Body of pancreas (tissue), 4 donors: ENCODE measurements at regions of chr22 and their contacts with region 1.

Region 1: GRCh38 chr22:50269970-50270665 is at the start of gene MAPK11:
- DNase-seq: peak in 2 of 4 donors; percentile 43 to 45
- ATAC-seq: peak; percentile 46
- H3K4me3 ChIP-seq: peak within 1 kb of the TSS in 1 of 2 donors; percentile 3
- H3K27ac ChIP-seq: peak within 1 kb of the TSS in 2 of 4 donors; percentile 28 to 44
- H3K4me1 ChIP-seq: peaks cover 52% of the 10 kb centered on the region
- H3K27me3 ChIP-seq: no peaks in the 10 kb centered on the region
- CTCF ChIP-seq: no peak
- POLR2A ChIP-seq: no peak
- total RNA-seq, gene MAPK11: 3.0 to 3.6 TPM

Region 2: DNA sequence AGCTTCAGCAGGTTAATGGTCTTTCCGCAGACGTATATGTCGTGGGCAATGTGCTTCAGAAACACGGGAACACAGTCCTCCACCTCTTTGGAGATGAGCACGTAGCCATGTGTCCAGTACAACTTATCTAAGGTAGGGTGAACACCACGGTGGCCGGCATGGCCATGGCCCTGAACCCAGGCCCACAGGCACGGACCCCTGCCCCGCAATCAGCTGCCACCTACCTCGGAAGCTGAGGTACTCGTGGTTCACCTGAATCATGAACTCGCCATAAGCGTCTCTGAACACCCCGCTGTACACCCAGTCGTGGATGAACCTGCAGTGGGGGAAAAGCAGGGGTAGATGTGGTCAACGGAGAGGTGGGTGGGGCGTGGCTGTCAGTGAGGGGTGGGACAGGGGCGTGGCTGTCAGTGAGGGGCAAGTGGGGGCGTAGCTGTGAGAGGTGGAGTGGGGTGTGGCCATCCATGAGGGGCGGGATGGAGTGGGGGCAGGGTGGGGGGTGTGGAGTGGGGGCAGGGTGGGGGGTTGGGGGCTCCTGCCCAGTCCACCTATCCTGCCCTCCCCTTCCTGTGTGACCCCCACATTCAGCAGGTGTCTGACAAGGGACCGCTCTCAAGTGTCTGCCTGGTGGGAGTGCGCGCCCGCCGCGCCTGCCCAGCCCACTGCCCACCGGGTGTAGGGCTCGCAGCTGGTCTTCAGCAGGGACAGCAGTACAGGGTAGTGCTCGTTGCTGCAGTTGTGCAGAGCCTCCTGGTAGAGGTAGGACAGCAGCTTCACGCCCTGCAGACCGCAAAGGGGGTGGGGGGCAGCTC is 43.8 kb before region 1 on chr22:
- intact Hi-C with region 1: no loop called
- DNase-seq: no peak
- ATAC-seq: no peak
- H3K4me3 ChIP-seq: no peak overlapping the region
- H3K27ac ChIP-seq: no peak overlapping the region
- H3K4me1 ChIP-seq: peaks cover 9% of the 10 kb centered on the region
- H3K27me3 ChIP-seq: no peaks in the 10 kb centered on the region
- CTCF ChIP-seq: no peak
- POLR2A ChIP-seq: no peak

Region 3: DNA sequence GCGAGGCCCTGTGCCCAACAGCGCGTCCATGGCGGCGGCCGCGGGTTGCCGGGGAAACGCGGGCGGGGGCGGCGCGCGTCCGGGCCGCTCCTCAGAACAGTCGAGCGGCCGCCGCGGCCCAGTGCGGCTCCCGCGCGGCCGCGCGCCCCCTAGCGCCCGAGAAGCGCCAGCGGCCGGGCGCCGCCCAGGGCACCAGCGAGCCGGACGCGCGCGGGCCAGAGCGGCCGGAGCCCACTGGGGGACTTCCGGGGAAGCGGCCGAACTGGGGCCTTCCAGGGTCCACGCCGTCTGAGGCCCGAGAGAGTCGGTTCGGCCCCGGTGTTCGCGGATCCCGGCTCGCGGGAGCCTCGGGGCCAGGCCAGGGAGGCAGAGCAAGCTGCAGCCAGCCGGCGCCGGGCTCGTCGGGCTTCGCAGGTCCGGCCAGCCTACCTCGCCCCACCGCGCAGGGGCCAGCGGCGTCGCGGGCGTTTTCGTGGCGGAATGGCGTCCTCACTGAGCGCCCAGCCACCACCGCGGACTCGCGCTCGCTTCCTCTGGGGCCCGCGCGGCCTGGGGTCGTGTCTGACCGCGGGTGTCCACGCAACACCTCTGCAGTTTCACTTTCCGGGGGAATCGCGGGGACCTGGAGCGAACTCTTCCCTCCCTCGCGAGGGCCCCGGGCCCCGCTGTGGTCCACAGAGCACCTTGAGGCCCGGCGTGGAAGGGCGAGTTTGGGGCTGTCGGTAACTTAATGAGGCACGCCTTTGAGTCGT is 57.0 kb after region 1 on chr22 and contains the start of gene DENND6B:
- intact Hi-C with region 1: loop called (anchors 5 kb)
- DNase-seq: peak; percentile 85 to 89 (median 86)
- ATAC-seq: peak; percentile 95
- H3K4me3 ChIP-seq: peak within 1 kb of the TSS; percentile 69 to 73
- H3K27ac ChIP-seq: peak within 1 kb of the TSS; percentile 87 to 94 (median 93)
- H3K4me1 ChIP-seq: peaks cover 26% of the 10 kb centered on the region
- H3K27me3 ChIP-seq: no peaks in the 10 kb centered on the region
- CTCF ChIP-seq: peak in 6 of 7 experiments; percentile 31 to 99 (median 80)
- POLR2A ChIP-seq: peak; percentile 69 to 81 (median 80)
- total RNA-seq, gene DENND6B: 3.4 to 7.3 TPM

Region 4: DNA sequence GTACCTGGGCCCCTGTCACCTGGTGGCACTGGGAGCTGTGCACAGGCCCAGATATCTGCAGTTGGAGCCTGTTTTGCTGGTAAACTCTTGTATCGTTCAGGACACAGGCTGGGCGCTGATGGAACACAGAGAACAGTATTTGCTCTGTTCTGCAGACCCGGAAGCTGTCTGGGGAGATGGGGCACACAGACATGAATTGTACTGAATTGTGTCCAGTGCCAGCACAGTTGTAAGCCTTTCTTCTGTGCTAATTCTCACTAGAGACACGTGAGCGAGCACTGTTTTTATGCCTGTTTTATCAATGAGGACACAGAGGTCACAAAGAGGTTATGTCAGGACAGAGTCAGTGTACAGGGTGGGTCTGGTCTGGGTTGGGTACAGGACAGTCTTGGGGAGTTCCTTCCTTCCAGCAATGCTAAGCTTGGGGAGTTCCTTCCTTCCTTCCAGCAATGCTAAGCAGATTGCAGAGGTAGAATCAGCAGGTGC is 443.5 kb after region 1 on chr22:
- intact Hi-C with region 1: no loop called
- DNase-seq: peak in 2 of 4 donors; percentile 39
- ATAC-seq: peak; percentile 63
- H3K4me3 ChIP-seq: no peak overlapping the region
- H3K27ac ChIP-seq: peak overlapping the region in 3 of 4 donors; percentile 18 to 65 (median 55)
- H3K4me1 ChIP-seq: peaks cover 10% of the 10 kb centered on the region
- H3K27me3 ChIP-seq: no peaks in the 10 kb centered on the region
- CTCF ChIP-seq: no peak
- POLR2A ChIP-seq: no peak